Mammary epithelial cell (primary cell): ENCODE measurements at regions of chr10 and their contacts with region 1.

Region 1: GRCh38 chr10:131094527-131095327 is 216.8 kb downstream of the TCERG1L start:
- DNase-seq: peak; percentile 82
- H3K4me3 ChIP-seq: peak overlapping the region in 1 of 3 experiments; percentile 8
- H3K27ac ChIP-seq: no peak overlapping the region
- H3K4me1 ChIP-seq: peaks cover 2% of the 10 kb centered on the region
- H3K27me3 ChIP-seq: no peaks in the 10 kb centered on the region
- CTCF ChIP-seq: no peak

Region 2: GRCh38 chr10:130615489-130615888 is 479.2 kb before region 1 on chr10:
- CTCF ChIA-PET with region 1: no interaction called
- dilution Hi-C with region 1: no loop called
- in situ Hi-C with region 1: no loop called
- intact Hi-C with region 1: loop called (anchors 10 kb)
- DNase-seq: no peak
- H3K4me3 ChIP-seq: no peak overlapping the region
- H3K27ac ChIP-seq: no peak overlapping the region
- H3K4me1 ChIP-seq: no peaks in the 10 kb centered on the region
- H3K27me3 ChIP-seq: no peaks in the 10 kb centered on the region
- CTCF ChIP-seq: peak in 1 of 2 donors; percentile 7

Region 3: DNA sequence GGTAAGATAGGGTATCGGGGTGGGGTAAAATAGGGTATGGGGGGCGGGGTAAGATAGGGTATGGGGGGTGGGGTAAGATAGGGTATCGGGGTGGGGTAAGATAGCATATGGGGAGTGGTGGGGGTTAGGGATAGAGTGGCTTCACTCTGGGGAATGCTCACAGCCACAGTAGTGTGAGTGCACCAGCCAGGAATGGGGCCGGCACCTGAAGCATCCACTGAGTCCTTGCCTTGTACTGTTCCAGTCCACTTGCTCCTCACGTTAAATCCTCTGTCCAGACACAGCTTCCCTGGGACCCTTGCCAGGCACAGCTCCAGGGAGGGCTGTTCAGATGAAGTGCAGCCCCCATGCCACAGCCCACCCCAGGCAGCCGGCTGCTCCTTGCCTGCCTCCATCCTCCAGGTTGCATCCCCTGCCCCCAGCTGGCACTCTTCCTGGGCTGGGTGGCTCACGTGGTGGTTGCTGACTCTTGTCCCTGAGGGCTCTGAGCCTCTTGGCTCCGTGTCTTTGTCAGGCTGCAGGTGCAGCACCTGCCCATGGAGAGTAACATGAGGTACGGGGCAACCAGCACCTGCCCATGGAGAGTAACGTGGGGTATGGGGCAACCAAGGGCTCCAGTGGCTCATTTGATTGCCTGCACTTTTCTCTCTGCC is 51.6 kb before region 1 on chr10:
- CTCF ChIA-PET with region 1: no interaction called
- dilution Hi-C with region 1: no loop called
- in situ Hi-C with region 1: no loop called
- intact Hi-C with region 1: no loop called
- DNase-seq: no peak
- H3K4me3 ChIP-seq: no peak overlapping the region
- H3K27ac ChIP-seq: no peak overlapping the region
- H3K4me1 ChIP-seq: no peaks in the 10 kb centered on the region
- H3K27me3 ChIP-seq: no peaks in the 10 kb centered on the region
- CTCF ChIP-seq: no peak

Region 4: DNA sequence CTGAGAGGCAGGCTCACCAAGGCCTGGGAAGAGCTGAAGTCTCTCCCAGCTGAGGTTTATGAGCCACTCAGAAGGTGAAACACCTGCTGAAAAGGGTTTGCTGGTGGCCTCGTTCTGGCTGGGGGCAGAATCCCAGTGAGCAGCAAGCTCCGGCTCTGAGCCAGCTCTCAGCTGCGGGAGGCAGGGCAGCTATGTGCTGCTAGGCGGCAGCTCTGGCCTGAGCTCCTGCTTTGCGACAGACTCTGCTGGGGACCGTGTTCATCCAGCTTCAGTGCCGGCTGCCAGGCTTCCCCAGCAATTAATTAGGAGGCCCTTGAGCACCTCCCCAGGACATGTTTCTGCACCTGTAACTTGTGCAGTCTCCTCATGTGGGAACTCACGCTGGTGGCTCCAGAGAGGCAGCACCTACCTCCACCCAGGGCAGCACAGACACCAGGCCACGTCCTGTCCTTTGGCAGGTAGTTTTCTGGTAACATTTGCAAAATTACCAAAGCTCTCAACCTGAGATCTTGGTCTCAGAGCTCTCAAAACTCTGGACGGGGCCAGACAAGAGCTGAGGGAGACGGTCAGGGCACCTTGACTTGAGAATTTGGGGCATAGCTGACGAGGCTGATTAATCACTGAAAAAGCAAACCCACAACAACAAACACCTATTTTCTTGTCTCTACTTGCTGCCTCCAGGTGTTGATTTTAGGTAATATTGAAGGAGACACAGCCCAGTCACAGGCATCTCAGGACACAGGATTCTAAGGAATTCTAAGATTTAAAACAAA is 31.8 kb after region 1 on chr10:
- CTCF ChIA-PET with region 1: no interaction called
- dilution Hi-C with region 1: no loop called
- in situ Hi-C with region 1: no loop called
- intact Hi-C with region 1: loop called (anchors 1 kb)
- DNase-seq: peak; percentile 66
- H3K4me3 ChIP-seq: no peak overlapping the region
- H3K27ac ChIP-seq: no peak overlapping the region
- H3K4me1 ChIP-seq: no peaks in the 10 kb centered on the region
- H3K27me3 ChIP-seq: no peaks in the 10 kb centered on the region
- CTCF ChIP-seq: no peak

Region 5: GRCh38 chr10:131496351-131497052 is 401.8 kb after region 1 on chr10:
- CTCF ChIA-PET with region 1: no interaction called
- dilution Hi-C with region 1: no loop called
- in situ Hi-C with region 1: no loop called
- intact Hi-C with region 1: no loop called
- DNase-seq: no peak
- H3K4me3 ChIP-seq: no peak overlapping the region
- H3K27ac ChIP-seq: no peak overlapping the region
- H3K4me1 ChIP-seq: no peaks in the 10 kb centered on the region
- H3K27me3 ChIP-seq: no peaks in the 10 kb centered on the region
- CTCF ChIP-seq: no peak